ENCODE measurements at regions of chr4 and their contacts with region 1.

Region 1: DNA sequence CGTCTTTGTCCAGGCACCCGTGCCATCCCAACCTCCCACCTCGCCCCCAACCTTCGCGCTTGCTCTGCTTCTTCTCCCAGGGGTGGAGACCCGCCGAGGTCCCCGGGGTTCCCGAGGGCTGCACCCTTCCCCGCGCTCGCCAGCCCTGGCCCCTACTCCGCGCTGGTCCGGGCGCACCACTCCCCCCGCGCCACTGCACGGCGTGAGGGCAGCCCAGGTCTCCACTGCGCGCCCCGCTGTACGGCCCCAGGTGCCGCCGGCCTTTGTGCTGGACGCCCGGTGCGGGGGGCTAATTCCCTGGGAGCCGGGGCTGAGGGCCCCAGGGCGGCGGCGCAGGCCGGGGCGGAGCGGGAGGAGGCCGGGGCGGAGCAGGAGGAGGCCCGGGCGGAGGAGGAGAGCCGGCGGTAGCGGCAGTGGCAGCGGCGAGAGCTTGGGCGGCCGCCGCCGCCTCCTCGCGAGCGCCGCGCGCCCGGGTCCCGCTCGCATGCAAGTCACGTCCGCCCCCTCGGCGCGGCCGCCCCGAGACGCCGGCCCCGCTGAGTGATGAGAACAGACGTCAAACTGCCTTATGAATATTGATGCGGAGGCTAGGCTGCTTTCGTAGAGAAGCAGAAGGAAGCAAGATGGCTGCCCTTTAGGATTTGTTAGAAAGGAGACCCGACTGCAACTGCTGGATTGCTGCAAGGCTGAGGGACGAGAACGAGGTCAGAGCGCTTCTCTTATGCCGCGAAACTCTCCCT is at the start of gene TET2:
- DNase-seq: peak; percentile 75
- H3K4me3 Mint-ChIP-seq: peak within 1 kb of the TSS; percentile 95
- H3K27ac Mint-ChIP-seq: peak within 1 kb of the TSS; percentile 98
- H3K4me1 Mint-ChIP-seq: peaks cover 33% of the 10 kb centered on the region
- H3K27me3 Mint-ChIP-seq: no peaks in the 10 kb centered on the region
- total RNA-seq, gene TET2: 31.1 and 31.2 TPM in 2 replicates

Region 2: DNA sequence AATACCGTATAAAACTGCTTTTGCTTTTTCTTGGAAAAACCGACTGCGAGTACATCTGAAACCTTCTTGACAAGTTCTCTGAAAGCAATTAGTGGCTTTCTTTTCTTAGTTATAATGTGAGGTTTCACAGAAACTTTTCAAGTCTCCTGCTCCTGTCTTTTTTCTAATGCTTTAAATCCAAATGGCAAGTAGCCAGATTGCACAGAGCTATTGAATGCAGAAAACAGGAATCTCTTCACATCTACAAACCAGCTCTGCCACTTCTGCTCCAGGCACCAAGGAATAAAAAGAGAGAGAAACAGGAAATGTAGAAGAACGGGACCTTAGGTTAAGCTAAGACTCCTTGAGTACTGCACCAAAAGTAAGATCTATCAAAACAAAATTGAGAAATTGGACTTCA is 267.1 kb before region 1 on chr4:
- intact Hi-C with region 1: loop called (anchors 10 kb)
- DNase-seq: no peak
- H3K4me3 Mint-ChIP-seq: peak overlapping the region; percentile 13
- H3K27ac Mint-ChIP-seq: no peak overlapping the region
- H3K4me1 Mint-ChIP-seq: peaks cover 16% of the 10 kb centered on the region
- H3K27me3 Mint-ChIP-seq: peaks cover 5% of the 10 kb centered on the region

Region 3: GRCh38 chr4:105036991-105037390 is 109.5 kb before region 1 on chr4:
- intact Hi-C with region 1: no loop called
- DNase-seq: no peak
- H3K4me3 Mint-ChIP-seq: no peak overlapping the region
- H3K27ac Mint-ChIP-seq: no peak overlapping the region
- H3K4me1 Mint-ChIP-seq: no peaks in the 10 kb centered on the region
- H3K27me3 Mint-ChIP-seq: peaks cover 20% of the 10 kb centered on the region

Region 4: GRCh38 chr4:105061136-105061696 is 85.2 kb before region 1 on chr4:
- intact Hi-C with region 1: loop called (anchors 2 kb)
- DNase-seq: peak; percentile 18
- H3K4me3 Mint-ChIP-seq: peak overlapping the region; percentile 51
- H3K27ac Mint-ChIP-seq: peak overlapping the region; percentile 80
- H3K4me1 Mint-ChIP-seq: peaks cover 44% of the 10 kb centered on the region
- H3K27me3 Mint-ChIP-seq: peaks cover 2% of the 10 kb centered on the region

Region 5: DNA sequence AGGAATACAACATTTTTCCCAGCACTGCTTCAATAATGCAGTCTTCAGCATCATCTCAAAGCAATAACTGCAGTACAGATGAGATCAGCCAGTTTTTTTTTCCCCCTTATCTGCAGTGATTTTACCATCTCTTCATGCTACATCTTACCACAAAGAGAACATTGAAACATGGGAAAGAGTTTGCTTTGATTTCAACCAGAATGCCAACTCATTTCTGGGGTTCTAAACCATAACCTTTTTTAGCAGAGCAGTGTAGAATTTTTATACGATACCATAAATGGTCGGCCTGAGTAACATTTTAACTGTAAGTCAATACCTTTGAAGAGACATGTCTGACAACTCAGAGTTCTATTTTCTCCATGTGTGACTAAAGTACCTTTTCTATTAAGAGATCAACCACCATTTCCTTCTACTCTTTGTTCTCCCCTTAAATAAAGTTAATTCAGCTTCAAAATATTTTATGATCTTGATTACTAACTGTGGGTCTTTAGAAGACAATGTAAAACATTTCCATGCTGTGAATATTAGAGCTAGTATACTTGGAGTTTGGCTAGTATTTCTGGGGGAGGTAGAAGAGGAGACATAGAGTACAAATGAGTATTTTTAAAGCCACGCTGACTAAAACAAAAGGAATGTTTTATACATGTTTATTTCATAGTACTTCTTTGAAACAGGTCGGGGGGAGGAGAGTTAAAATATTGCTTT is 69.3 kb after region 1 on chr4:
- intact Hi-C with region 1: loop called (anchors 5 kb)
- DNase-seq: no peak
- H3K4me3 Mint-ChIP-seq: no peak overlapping the region
- H3K27ac Mint-ChIP-seq: peak overlapping the region; percentile 63
- H3K4me1 Mint-ChIP-seq: peaks cover 25% of the 10 kb centered on the region
- H3K27me3 Mint-ChIP-seq: no peaks in the 10 kb centered on the region

Region 6: GRCh38 chr4:105236202-105236915 is 89.9 kb after region 1 on chr4:
- intact Hi-C with region 1: no loop called
- DNase-seq: no peak
- H3K4me3 Mint-ChIP-seq: no peak overlapping the region
- H3K27ac Mint-ChIP-seq: peak overlapping the region; percentile 15
- H3K4me1 Mint-ChIP-seq: peaks cover 7% of the 10 kb centered on the region
- H3K27me3 Mint-ChIP-seq: no peaks in the 10 kb centered on the region

Region 7: GRCh38 chr4:105306158-105306781 is 159.8 kb after region 1 on chr4:
- intact Hi-C with region 1: loop called (anchors 1 kb)
- DNase-seq: peak; percentile 47
- H3K4me3 Mint-ChIP-seq: peak overlapping the region; percentile 18
- H3K27ac Mint-ChIP-seq: peak overlapping the region; percentile 74
- H3K4me1 Mint-ChIP-seq: peaks cover 28% of the 10 kb centered on the region
- H3K27me3 Mint-ChIP-seq: no peaks in the 10 kb centered on the region

Region 8: DNA sequence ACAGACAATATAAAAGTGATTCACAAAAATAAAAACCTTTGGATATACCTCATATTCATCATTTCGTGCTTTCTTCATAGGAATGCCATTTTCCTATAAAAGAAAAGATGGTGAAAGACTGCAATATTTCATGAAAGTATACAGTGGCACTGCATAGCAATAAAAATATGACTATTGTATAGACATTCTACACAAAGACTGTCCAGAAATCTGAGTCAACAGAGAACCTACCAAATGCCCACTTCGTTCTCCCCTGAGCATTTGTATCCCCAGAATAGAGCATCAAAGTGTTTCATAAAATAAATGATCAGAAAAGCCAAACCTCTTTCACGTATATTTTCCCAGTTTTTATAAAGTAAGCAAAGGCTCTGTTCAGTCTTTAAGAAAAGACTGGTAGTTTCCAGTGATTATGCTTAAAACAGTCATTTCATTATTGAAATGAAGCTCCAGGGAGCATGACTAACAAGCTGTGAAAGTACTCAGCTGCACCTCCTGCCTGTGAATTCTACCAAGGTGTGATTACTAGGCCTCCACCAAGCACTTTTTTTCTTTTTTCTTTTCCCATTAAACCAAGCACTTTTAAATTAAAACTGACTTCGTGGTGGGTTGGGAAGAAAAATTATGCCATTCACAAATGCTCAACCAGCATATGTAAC is 307.2 kb after region 1 on chr4:
- intact Hi-C with region 1: loop called (anchors 5 kb)
- DNase-seq: no peak
- H3K4me3 Mint-ChIP-seq: no peak overlapping the region
- H3K27ac Mint-ChIP-seq: peak overlapping the region; percentile 57
- H3K4me1 Mint-ChIP-seq: peaks cover 22% of the 10 kb centered on the region
- H3K27me3 Mint-ChIP-seq: no peaks in the 10 kb centered on the region

Region 9: GRCh38 chr4:105708530-105709391 is 562.3 kb after region 1 on chr4 and contains the starts of genes GSTCD and INTS12:
- intact Hi-C with region 1: loop called (anchors 5 kb)
- DNase-seq: peak; percentile 82
- H3K4me3 Mint-ChIP-seq: peak within 1 kb of the TSS; percentile 98
- H3K27ac Mint-ChIP-seq: peak within 1 kb of the TSS; percentile 94
- H3K4me1 Mint-ChIP-seq: peaks cover 26% of the 10 kb centered on the region
- H3K27me3 Mint-ChIP-seq: no peaks in the 10 kb centered on the region
- total RNA-seq, gene GSTCD: 15.7 and 16.7 TPM in 2 replicates
- total RNA-seq, gene INTS12: 18.5 and 22.0 TPM in 2 replicates